ENCODE measurements at regions of chr3 and their contacts with region 1.

Region 1: DNA sequence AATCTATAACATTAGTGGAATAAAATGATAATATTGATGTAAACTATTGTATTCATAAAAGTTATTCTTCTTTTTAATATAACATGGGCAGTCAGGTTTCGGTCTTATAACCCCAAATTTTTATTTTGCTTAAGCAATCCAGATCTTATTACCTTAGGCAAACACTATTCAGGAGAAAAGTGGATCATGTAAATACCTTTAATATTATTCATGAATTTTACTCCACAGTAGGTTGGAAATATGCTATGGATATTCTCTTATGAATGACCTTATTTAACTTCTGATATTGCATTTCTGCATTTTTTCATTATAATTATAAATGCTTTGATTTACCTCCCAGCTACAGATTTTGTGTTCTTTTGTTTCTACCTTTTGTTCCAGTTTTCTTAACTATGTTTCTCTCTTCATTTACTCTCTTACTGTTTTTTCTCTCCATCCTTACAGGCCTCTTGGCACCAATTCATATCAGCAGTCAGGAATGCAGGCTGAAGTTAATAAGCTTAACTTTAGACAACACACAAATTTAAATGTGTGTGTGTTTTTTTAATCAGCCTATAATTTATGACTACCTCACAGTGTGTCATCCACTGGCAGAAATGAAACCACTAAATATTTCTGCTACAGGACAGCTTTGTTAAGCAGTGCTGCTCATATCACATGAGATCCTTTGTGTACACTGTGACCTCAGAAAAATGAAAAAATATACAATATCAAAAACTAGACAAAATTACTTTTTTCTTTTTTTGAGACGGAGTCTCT is 111.0 kb downstream of the NSUN3 start:
- DNase-seq: peak; percentile 51
- H3K4me3 ChIP-seq: no peak overlapping the region
- H3K27ac ChIP-seq: no peak overlapping the region
- H3K4me1 ChIP-seq: peaks cover 20% of the 10 kb centered on the region
- H3K27me3 ChIP-seq: no peaks in the 10 kb centered on the region
- CTCF ChIP-seq: no peak

Region 2: GRCh38 chr3:94069194-94069813 is 104.6 kb before region 1 on chr3:
- CTCF ChIA-PET with region 1: no interaction called
- dilution Hi-C with region 1: no loop called
- in situ Hi-C with region 1: no loop called
- intact Hi-C with region 1: no loop called
- DNase-seq: no peak
- H3K4me3 ChIP-seq: no peak overlapping the region
- H3K27ac ChIP-seq: no peak overlapping the region
- H3K4me1 ChIP-seq: no peaks in the 10 kb centered on the region
- H3K27me3 ChIP-seq: no peaks in the 10 kb centered on the region
- CTCF ChIP-seq: peak; percentile 44 to 49

Region 3: DNA sequence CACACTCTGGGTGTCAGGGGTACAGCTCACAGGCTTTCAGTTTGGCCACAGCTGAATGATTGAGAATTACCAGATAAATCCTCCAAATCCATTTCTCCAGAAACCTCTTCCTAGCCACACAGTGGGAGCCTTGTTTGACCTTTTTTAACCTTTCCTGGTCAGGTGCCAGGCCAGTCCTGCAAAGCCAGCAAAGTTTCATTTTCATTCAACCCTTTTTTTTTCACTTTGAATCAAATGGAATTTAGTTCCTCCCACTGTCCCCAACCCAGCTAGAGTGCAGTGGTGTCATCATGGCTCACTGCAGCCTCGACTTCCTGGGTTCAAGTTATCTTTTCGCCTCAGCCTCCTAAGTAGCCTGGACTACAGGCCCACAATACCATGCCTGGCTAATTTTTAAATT is 43.2 kb before region 1 on chr3:
- CTCF ChIA-PET with region 1: no interaction called
- dilution Hi-C with region 1: loop called (anchors 5 kb)
- in situ Hi-C with region 1: no loop called
- intact Hi-C with region 1: no loop called
- DNase-seq: no peak
- H3K4me3 ChIP-seq: no peak overlapping the region
- H3K27ac ChIP-seq: no peak overlapping the region
- H3K4me1 ChIP-seq: peaks cover 6% of the 10 kb centered on the region
- H3K27me3 ChIP-seq: no peaks in the 10 kb centered on the region
- CTCF ChIP-seq: no peak

Region 4: DNA sequence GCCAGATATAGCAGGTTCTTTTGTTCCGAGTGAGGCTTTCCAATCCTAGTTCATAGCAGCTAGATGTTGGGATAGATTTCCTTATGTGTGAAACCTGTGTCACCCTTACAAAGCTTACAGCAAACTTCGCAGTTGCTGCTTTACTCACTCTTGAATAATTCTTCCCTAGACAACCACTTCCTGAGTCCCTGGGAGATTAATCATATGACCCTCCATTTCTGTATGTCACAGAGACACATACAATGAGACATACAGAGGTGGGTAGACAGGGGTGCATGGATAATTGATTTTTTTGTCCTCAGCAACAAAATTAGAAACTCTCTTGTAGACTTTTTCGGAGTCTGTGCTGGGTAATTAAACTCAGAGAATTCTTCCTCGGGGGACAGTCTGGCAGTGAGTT is 52.2 kb after region 1 on chr3:
- CTCF ChIA-PET with region 1: no interaction called
- dilution Hi-C with region 1: no loop called
- in situ Hi-C with region 1: no loop called
- intact Hi-C with region 1: loop called (anchors 10 kb)
- DNase-seq: peak; percentile 82
- H3K4me3 ChIP-seq: no peak overlapping the region
- H3K27ac ChIP-seq: peak overlapping the region; percentile 40
- H3K4me1 ChIP-seq: peaks cover 19% of the 10 kb centered on the region
- H3K27me3 ChIP-seq: no peaks in the 10 kb centered on the region
- CTCF ChIP-seq: no peak